Heart right ventricle (tissue), 16 donors: ENCODE measurements at regions of chr18 and their contacts with region 1.

Region 1: DNA sequence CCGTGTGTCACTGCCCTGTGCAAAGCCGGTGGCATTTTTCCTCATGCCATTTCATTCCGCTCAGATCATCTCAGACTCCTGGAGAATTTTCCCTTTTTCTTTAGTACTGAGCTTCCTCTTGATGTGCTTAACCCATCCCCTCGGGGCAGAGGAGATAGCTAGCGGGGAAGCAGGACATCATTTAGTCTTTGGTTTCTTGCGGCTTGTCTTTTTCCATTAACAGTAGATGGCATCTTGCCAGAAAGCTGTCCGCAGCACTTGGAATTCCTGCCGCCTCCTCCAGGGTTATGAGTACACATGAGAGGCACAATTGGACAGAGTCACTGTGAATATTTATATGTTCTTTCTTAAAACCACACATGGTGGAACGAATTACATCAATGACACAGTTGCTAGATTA is 226.6 kb downstream of the ALPK2 start:
- DNase-seq: no peak
- ATAC-seq: peak in 4 of 8 donors; percentile 13 to 71 (median 46)
- H3K4me3 ChIP-seq: no peak overlapping the region
- H3K27ac ChIP-seq: no peak overlapping the region
- H3K4me1 ChIP-seq: peaks cover 0 to 20% (median 11%) of the 10 kb centered on the region in 9 donors
- H3K27me3 ChIP-seq: no peaks in the 10 kb centered on the region
- CTCF ChIP-seq: no peak

Region 2: GRCh38 chr18:58338961-58339592 is 63.2 kb before region 1 on chr18:
- intact Hi-C with region 1: no loop called
- DNase-seq: no peak
- ATAC-seq: peak in 3 of 8 donors; percentile 11 to 58 (median 24)
- H3K4me3 ChIP-seq: no peak overlapping the region
- H3K27ac ChIP-seq: no peak overlapping the region
- H3K4me1 ChIP-seq: peaks cover 0 to 30% (median 9%) of the 10 kb centered on the region in 9 donors
- H3K27me3 ChIP-seq: no peaks in the 10 kb centered on the region
- CTCF ChIP-seq: no peak

Region 3: GRCh38 chr18:58565021-58565420 is 162.8 kb after region 1 on chr18:
- intact Hi-C with region 1: no loop called
- DNase-seq: no peak
- ATAC-seq: peak in 1 of 8 donors; percentile 46
- H3K4me3 ChIP-seq: no peak overlapping the region
- H3K27ac ChIP-seq: peak overlapping the region in 3 of 10 donors; percentile 1 to 62 (median 8)
- H3K4me1 ChIP-seq: peaks cover 0 to 48% (median 23%) of the 10 kb centered on the region in 9 donors
- H3K27me3 ChIP-seq: no peaks in the 10 kb centered on the region
- CTCF ChIP-seq: no peak

Region 4: DNA sequence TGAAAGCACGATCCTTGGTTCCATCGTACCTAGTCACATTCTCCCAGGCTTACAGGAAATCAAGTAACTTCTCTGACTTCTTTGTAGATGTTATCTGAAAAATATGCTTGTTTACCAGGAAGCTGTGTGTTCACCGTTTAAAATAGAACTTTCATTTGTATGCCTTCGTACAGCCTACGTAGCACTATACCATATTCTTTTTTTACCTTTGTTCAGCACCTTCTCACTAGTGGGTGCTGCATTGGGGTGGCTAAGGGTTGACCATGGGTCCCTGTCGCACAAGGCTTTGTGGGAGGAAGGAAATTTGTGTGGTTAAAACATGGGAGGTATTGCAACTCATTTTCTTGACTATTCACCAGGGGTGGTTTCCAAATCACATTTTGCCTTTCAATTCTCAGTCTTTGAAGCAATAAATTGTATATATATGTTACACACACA is 285.6 kb after region 1 on chr18:
- intact Hi-C with region 1: no loop called
- DNase-seq: no peak
- ATAC-seq: peak in 6 of 8 donors; percentile 35 to 65 (median 46)
- H3K4me3 ChIP-seq: no peak overlapping the region
- H3K27ac ChIP-seq: peak overlapping the region in 4 of 10 donors; percentile 11 to 60 (median 39)
- H3K4me1 ChIP-seq: peaks cover 0 to 26% (median 8%) of the 10 kb centered on the region in 9 donors
- H3K27me3 ChIP-seq: no peaks in the 10 kb centered on the region
- CTCF ChIP-seq: no peak

Region 5: GRCh38 chr18:58768293-58768974 is 366.2 kb after region 1 on chr18:
- intact Hi-C with region 1: loop called in 3 of 10 experiments (anchors 5 to 10 kb)
- DNase-seq: peak; percentile 69 to 77
- ATAC-seq: peak; percentile 88 to 94 (median 92)
- H3K4me3 ChIP-seq: peak overlapping the region in 9 of 10 donors; percentile 9 to 47 (median 33)
- H3K27ac ChIP-seq: peak overlapping the region in 4 of 10 donors; percentile 21 to 30 (median 24)
- H3K4me1 ChIP-seq: peaks cover 4 to 23% (median 13%) of the 10 kb centered on the region in 9 donors
- H3K27me3 ChIP-seq: peaks cover 0 to 48% (median 0%) of the 10 kb centered on the region in 7 donors
- CTCF ChIP-seq: peak; percentile 63 to 96 (median 85)